ENCODE measurements at regions of chr1 and their contacts with region 1.

Region 1: GRCh38 chr1:220458936-220459335 is 69.0 kb upstream of the MARK1 start:
- DNase-seq: no peak

Region 2: GRCh38 chr1:220363196-220363837 is 95.6 kb before region 1 on chr1:
- intact Hi-C with region 1: loop called (anchors 5 kb)
- DNase-seq: no peak

Measured in cardiac septum (tissue), 1 donor.